Gastrocnemius medialis (tissue), 4 donors: ENCODE measurements at regions of chr4 and their contacts with region 1.

Region 1: GRCh38 chr4:1130316-1131186 is 17.2 kb upstream of the RNF212 start:
- DNase-seq: peak; percentile 28 to 45
- ATAC-seq: peak; percentile 88 to 95
- H3K4me3 ChIP-seq: no peak overlapping the region
- H3K27ac ChIP-seq: no peak overlapping the region
- H3K4me1 ChIP-seq: no peaks in the 10 kb centered on the region
- H3K27me3 ChIP-seq: no peaks in the 10 kb centered on the region
- CTCF ChIP-seq: peak; percentile 89 to 99 (median 93)
- POLR2A ChIP-seq: no peak

Region 2: DNA sequence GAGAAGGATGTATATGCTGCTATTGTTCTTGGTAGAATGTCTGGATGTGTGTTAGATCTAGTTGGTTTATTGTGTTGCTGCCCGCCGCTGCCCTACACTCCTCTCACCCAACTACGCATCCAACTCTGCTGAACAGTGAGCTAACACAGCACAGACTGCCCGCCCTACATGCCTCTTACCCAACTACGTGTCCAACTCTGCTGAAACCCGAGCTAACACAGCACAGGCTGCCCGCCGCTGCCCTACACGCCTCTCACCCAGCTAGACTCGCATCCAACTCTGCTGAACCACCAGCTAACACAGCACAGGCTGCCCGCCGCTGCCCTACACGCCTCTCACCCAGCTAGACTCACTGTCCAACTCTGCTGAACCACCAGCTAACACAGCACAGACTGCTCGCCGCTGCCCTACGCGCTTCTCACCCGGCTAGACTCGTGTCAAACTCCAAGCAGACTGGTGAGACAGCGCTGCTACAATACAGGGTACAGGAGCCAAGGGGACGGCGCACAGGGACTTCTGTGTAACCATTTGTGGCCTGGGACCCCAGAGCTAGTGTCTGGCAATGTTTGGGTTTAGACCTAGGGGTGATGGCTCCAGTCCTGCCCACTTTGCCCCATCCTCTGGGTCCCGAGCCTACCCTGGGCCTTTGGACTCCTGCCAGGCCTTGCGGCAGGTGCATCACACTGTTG is 130.0 kb after region 1 on chr4:
- in situ Hi-C with region 1: loop called in 3 of 4 experiments (anchors 5 to 10 kb)
- intact Hi-C with region 1: no loop called
- DNase-seq: no peak
- ATAC-seq: no peak
- H3K4me3 ChIP-seq: no peak overlapping the region
- H3K27ac ChIP-seq: peak overlapping the region in 1 of 4 donors; percentile 13
- H3K4me1 ChIP-seq: no peaks in the 10 kb centered on the region
- H3K27me3 ChIP-seq: no peaks in the 10 kb centered on the region
- CTCF ChIP-seq: no peak
- POLR2A ChIP-seq: no peak

Region 3: GRCh38 chr4:1266881-1267763 is 136.6 kb after region 1 on chr4:
- in situ Hi-C with region 1: loop called in 3 of 4 experiments (anchors 5 to 10 kb)
- intact Hi-C with region 1: loop called (anchors 1 kb)
- DNase-seq: no peak
- ATAC-seq: no peak
- H3K4me3 ChIP-seq: no peak overlapping the region
- H3K27ac ChIP-seq: no peak overlapping the region
- H3K4me1 ChIP-seq: no peaks in the 10 kb centered on the region
- H3K27me3 ChIP-seq: no peaks in the 10 kb centered on the region
- CTCF ChIP-seq: no peak
- POLR2A ChIP-seq: no peak

Region 4: GRCh38 chr4:1351854-1352633 is 221.5 kb after region 1 on chr4:
- in situ Hi-C with region 1: loop called (anchors 5 to 25 kb)
- intact Hi-C with region 1: loop called (anchors 1 kb)
- DNase-seq: peak; percentile 58 to 71
- ATAC-seq: peak; percentile 25 to 42
- H3K4me3 ChIP-seq: no peak overlapping the region
- H3K27ac ChIP-seq: peak overlapping the region in 1 of 4 donors; percentile 30
- H3K4me1 ChIP-seq: peaks cover 16 to 25% of the 10 kb centered on the region in 2 donors
- H3K27me3 ChIP-seq: no peaks in the 10 kb centered on the region
- CTCF ChIP-seq: peak; percentile 62 to 97 (median 90)
- POLR2A ChIP-seq: no peak